Activated naive CD4-positive, alpha-beta T cell treated with anti-CD3 and anti-CD28 coated beads for 36 hours (primary cell): ENCODE measurements at regions of chr7 and their contacts with region 1.

Region 1: GRCh38 chr7:87933945-87934698 is at the start of gene ADAM22:
- DNase-seq: peak; percentile 85
- H3K4me3 Mint-ChIP-seq: peak within 1 kb of the TSS; percentile 84
- H3K27ac Mint-ChIP-seq: no peak within 1 kb of the TSS
- H3K4me1 Mint-ChIP-seq: peaks cover 10% of the 10 kb centered on the region
- H3K27me3 Mint-ChIP-seq: peaks cover 7% of the 10 kb centered on the region
- total RNA-seq, gene ADAM22: 1.2 to 1.9 TPM

Region 2: GRCh38 chr7:87858417-87859100 is 75.6 kb before region 1 on chr7:
- CTCF ChIA-PET with region 1: no interaction called
- intact Hi-C with region 1: no loop called
- DNase-seq: no peak
- H3K4me3 Mint-ChIP-seq: no peak overlapping the region
- H3K27ac Mint-ChIP-seq: peak overlapping the region; percentile 78
- H3K4me1 Mint-ChIP-seq: peaks cover 19% of the 10 kb centered on the region
- H3K27me3 Mint-ChIP-seq: no peaks in the 10 kb centered on the region

Region 3: DNA sequence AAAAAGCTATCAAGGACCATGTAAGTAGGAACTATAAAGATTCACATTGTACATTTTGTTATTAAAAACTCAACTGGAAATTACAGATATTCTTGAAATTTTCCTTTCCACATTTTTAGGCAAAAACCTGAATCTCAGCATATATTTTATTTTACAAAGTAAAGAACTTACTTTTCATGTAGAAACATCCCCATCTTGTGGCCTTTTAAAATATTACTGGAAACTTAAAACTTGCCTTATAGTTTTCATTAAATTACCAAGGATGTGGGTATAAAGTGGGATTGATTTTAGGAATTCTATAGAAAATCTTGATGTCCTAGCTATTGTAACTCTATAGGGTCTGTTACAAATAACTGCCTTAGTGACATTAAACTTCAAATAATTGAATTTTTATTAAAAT is 47.2 kb before region 1 on chr7:
- CTCF ChIA-PET with region 1: no interaction called
- intact Hi-C with region 1: no loop called
- DNase-seq: no peak
- H3K4me3 Mint-ChIP-seq: no peak overlapping the region
- H3K27ac Mint-ChIP-seq: no peak overlapping the region
- H3K4me1 Mint-ChIP-seq: peaks cover 6% of the 10 kb centered on the region
- H3K27me3 Mint-ChIP-seq: no peaks in the 10 kb centered on the region

Region 4: GRCh38 chr7:87910138-87910537 is 24.0 kb before region 1 on chr7:
- CTCF ChIA-PET with region 1: no interaction called
- intact Hi-C with region 1: no loop called
- DNase-seq: no peak
- H3K4me3 Mint-ChIP-seq: no peak overlapping the region
- H3K27ac Mint-ChIP-seq: no peak overlapping the region
- H3K4me1 Mint-ChIP-seq: peaks cover 9% of the 10 kb centered on the region
- H3K27me3 Mint-ChIP-seq: no peaks in the 10 kb centered on the region

Region 5: GRCh38 chr7:88001744-88002530 is 67.8 kb after region 1 on chr7:
- CTCF ChIA-PET with region 1: no interaction called
- intact Hi-C with region 1: no loop called
- DNase-seq: no peak
- H3K4me3 Mint-ChIP-seq: no peak overlapping the region
- H3K27ac Mint-ChIP-seq: no peak overlapping the region
- H3K4me1 Mint-ChIP-seq: no peaks in the 10 kb centered on the region
- H3K27me3 Mint-ChIP-seq: no peaks in the 10 kb centered on the region

Region 6: DNA sequence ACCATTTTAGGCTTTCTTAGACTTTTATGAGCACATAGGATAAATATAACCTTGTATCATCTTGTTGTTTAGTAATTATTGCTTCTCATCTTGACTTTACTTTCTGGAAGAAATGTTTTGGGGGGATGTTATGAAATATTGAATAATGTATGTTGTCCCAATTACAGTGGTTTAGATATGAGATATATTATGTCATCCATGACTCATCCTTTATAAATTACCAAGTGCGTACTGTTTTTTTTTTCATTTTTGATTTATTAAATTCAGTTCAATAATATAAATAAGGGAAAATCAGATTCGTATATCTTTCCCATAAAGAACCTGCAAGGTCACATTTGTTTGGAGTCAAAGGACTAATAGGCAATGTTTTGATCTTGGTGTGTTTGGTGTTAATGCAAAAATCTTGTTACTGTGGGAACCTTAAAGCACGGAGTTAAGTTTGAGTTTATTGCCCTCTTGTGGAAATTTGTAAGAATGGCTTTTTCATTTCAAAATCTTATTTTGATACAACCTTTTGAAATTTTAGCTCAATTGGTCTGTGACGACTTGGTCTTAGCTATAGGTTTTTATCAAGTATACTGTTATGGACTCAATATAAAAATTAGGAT is 177.1 kb after region 1 on chr7:
- CTCF ChIA-PET with region 1: interaction called, 3 read pairs
- intact Hi-C with region 1: loop called (anchors 5 kb)
- DNase-seq: no peak
- H3K4me3 Mint-ChIP-seq: no peak overlapping the region
- H3K27ac Mint-ChIP-seq: no peak overlapping the region
- H3K4me1 Mint-ChIP-seq: peaks cover 4% of the 10 kb centered on the region
- H3K27me3 Mint-ChIP-seq: no peaks in the 10 kb centered on the region

Region 7: DNA sequence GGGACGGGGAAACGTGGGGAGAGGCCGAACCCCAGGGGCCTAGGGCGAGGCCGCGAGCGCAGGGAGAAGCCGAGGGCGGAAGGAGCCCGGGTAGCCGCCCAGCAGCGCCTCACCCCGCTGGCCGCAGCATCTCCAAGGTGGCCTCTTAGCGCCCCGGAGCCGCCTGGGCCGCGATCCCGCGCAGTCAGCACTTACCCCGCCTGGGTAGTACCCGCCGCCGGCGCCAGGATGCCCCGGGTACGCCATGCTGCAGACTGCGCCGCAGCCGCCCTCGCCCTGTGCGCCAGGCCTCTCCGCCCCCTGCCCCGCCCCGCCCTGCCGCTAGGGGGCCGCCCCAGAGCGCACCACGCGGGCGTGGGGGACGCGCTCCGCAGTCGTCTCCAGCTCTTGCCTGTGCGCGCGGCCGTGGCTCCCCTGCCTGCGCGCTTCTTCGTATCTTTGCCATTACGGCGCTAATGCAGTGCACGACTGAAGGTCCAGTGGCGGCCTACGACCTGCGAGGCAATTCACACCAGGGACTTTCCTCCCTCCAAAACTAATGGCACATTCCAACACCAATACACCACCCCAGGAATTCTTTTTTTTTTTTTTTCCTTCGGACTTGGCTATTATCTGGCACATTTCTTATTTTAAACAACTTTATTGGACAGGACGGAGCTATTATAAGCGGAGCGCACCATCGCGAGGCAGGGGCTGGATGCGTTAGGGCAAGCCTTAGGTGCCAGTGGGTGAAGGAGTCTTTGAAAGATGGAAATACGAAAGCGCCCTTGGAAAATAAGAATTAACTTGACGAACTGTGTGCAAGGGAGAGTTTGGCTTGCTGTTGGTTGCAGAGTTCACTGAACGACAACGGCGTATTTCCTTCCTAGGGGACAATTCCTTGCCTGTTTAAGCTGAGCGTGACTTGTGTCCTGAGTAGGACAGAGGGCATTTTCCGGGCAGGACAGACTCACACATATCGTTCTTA is 285.9 kb after region 1 on chr7 and contains the start of gene SRI:
- CTCF ChIA-PET with region 1: no interaction called
- intact Hi-C with region 1: loop called (anchors 2 kb)
- DNase-seq: peak; percentile 89
- H3K4me3 Mint-ChIP-seq: peak within 1 kb of the TSS; percentile 89
- H3K27ac Mint-ChIP-seq: peak within 1 kb of the TSS; percentile 88
- H3K4me1 Mint-ChIP-seq: peaks cover 23% of the 10 kb centered on the region
- H3K27me3 Mint-ChIP-seq: no peaks in the 10 kb centered on the region
- total RNA-seq, gene SRI: 152 to 168 TPM